ENCODE measurements at regions of chr16 and their contacts with region 1.

Region 1: GRCh38 chr16:58000706-58001676 is at the start of gene USB1:
- DNase-seq: peak; percentile 84 to 91 (median 89)
- H3K4me3 ChIP-seq: peak within 1 kb of the TSS; percentile 35 to 98 (median 53)
- H3K27ac ChIP-seq: peak within 1 kb of the TSS; percentile 63 to 92 (median 83)
- H3K4me1 ChIP-seq: peaks cover 19 to 37% of the 10 kb centered on the region in 2 donors
- H3K27me3 ChIP-seq: no peaks in the 10 kb centered on the region
- CTCF ChIP-seq: peak; percentile 20 to 78 (median 60)
- POLR2A ChIP-seq: peak in 1 of 2 donors; percentile 71
- total RNA-seq, gene USB1: 38.7 to 273 (median 54.3) TPM

Region 2: DNA sequence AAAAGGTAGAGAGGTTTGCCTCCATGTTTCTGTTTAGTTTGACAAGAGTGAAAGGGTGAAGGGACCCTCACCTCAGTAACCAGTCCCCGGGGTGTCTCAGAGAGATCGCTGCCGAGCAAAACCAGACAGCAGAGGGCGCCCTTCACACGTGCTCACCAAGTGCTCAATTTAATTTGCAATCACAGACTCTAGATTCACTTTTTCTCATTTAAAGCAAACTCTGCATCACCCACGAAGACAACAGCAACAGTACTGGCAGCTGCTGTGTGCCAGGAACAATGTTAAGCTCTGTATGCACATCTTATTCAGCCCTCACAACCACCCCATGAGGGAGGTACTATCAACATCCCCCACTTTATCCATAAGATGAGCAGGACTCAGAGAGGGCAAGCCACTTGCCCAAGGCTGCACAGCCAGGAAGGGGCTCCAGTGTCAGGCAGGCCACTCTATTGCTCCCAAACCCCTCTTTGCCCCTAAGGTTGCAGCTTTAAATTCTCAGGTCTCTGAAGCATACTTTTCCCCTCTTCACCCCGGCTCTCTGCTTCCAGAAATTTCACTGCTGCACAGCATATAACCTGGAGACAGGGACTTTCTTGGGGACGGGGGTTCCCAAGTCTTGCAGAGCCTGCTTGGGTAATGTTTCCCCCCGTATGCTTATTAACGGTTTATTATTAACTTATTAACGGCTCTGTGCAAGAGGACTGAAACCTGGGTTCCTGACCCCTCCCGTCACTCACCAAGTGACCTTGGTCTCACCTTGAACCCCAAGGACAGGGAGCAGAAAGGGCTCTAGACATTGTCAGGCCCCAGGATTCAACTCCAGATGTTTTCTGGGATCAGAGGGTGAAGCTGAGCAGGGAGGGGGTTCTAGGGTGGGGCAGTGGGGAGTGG is 101.0 kb before region 1 on chr16:
- intact Hi-C with region 1: loop called (anchors 2 to 5 kb)
- DNase-seq: peak; percentile 58 to 90 (median 80)
- H3K4me3 ChIP-seq: no peak overlapping the region
- H3K27ac ChIP-seq: no peak overlapping the region
- H3K4me1 ChIP-seq: no peaks in the 10 kb centered on the region
- H3K27me3 ChIP-seq: no peaks in the 10 kb centered on the region
- CTCF ChIP-seq: peak; percentile 80 to 89 (median 86)
- POLR2A ChIP-seq: no peak

Region 3: DNA sequence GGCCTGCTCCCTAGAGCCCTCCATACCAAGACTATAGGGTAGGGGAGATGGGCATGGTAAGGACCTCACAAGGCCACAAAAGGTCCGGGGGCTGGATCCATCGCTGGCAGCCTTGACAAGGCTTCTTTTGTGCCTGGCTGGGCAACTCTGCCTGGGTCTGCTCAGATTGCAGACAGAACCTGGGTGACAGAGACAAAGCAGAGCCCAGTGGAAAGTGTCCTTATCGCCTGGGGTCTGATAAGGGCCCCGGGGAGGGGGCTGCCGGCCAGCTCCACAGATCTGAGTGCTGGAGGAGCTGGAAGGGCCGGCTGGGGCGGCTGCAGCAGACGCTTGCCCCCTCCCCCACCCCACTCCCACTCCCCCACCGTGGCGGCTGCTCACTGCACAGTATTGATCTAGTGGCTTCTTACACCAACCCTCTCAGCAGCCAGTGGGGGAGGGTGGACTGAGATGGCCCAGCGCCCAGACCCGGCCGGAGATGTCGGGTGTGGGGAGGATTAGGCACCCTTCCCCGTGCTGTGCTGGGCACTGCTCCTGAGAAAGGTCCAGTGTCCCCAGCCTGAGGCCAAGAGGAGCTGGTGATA is 31.8 kb after region 1 on chr16:
- intact Hi-C with region 1: no loop called
- DNase-seq: peak; percentile 58 to 76 (median 71)
- H3K4me3 ChIP-seq: no peak overlapping the region
- H3K27ac ChIP-seq: peak overlapping the region in 1 of 5 donors; percentile 26
- H3K4me1 ChIP-seq: peaks cover 0 to 32% of the 10 kb centered on the region in 2 donors
- H3K27me3 ChIP-seq: no peaks in the 10 kb centered on the region
- CTCF ChIP-seq: no peak
- POLR2A ChIP-seq: no peak